Adrenal gland (tissue), 19 donors: ENCODE measurements at regions of chr7 and their contacts with region 1.

Region 1: DNA sequence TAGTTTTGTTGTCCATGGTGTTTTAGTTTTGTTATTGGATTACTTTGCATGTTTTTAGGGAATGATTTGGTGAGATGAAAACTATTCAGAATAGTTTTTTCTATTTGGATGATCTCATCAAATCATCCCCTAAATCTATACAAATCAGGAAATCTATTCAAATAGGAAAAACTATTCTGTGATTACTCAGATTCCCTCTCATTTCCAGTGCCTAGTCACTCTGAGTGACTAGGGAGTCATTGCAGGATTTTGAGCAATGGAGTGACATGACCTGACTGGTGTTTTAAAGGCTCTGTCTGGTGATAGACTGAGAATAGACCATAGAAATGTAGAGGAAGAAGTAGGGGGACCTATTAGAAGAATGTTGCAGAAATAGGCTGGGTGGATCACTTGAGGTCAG is 72.4 kb downstream of the TPST1 start:
- DNase-seq: no peak
- H3K4me3 ChIP-seq: no peak overlapping the region
- H3K27ac ChIP-seq: no peak overlapping the region
- H3K4me1 ChIP-seq: peaks cover 6 to 13% of the 10 kb centered on the region in 2 donors
- H3K27me3 ChIP-seq: no peaks in the 10 kb centered on the region
- CTCF ChIP-seq: no peak
- POLR2A ChIP-seq: no peak

Region 2: DNA sequence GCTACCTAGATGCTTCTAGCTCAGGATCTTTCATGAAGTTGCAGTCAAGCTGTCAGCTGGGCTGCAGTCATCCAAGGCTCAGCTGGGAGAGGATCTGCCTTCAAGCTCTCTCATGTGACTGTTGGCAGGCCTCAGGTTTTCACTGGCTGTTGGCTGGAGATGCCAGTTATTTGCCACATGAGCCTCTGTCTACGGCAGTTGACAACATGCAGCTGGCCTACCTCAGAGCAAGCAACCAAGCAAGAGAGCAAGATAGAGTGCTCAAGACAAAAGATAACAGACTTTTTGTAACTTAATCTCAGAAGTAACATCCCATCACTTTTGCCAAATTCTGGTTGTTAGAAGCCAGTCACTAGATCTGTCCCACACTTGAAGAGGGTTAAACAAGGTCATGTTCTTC is 53.5 kb after region 1 on chr7:
- intact Hi-C with region 1: loop called in 1 of 2 experiments (anchors 10 kb)
- DNase-seq: peak; percentile 43 to 89 (median 64)
- H3K4me3 ChIP-seq: no peak overlapping the region
- H3K27ac ChIP-seq: peak overlapping the region in 2 of 5 donors; percentile 24 to 25
- H3K4me1 ChIP-seq: peaks cover 0 to 26% of the 10 kb centered on the region in 2 donors
- H3K27me3 ChIP-seq: no peaks in the 10 kb centered on the region
- CTCF ChIP-seq: no peak
- POLR2A ChIP-seq: no peak